ENCODE measurements at regions of chr9 and their contacts with region 1.

Region 1: DNA sequence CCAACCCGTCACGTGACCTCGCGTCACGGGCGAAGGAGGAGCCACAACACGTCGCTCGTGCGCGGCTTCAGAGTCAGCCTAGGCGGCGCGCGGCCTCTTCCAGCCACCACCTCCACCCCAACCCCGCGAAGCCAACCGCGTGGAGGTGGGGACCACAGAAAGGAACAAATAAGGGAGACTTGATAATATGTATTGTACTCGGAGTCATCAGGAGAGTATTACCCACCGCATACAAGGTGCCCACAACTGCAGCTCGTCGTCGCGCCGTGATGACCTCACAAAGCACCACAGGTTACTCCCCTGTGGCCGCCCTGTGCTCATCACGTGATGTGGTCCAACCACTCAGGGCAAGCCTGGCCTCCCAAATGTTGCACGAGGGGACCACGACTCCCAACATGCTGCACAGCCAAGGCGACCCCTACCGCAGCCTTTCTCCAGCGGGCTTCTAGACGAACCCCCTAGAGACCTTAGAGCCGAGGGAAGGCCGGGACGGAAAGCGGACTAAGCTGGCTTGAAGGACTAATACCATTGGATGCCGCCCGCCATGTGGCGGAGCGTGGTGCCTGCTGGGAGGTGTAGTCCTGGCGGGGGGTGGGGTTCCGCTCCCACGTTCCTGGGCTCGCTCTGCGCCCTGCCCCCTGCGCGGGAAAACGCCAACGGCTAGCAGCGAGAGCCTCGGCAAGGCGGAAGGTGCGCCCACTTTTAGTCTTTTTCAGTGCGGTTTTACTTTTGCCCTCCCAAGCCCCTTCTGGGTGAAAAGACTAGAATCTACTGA is 423 bp upstream of the UBAP2 start:
- DNase-seq: peak; percentile 98 to 100 (median 99)

Region 2: GRCh38 chr9:33466565-33467495 is 582.3 kb before region 1 on chr9:
- intact Hi-C with region 1: no loop called
- DNase-seq: peak in 41 of 42 donors; percentile 30 to 86 (median 64)

Region 3: GRCh38 chr9:33816327-33817252 is 232.5 kb before region 1 on chr9 and contains the start of gene UBE2R2:
- intact Hi-C with region 1: loop called (anchors 10 kb)
- DNase-seq: peak; percentile 83 to 97 (median 94)

Region 4: DNA sequence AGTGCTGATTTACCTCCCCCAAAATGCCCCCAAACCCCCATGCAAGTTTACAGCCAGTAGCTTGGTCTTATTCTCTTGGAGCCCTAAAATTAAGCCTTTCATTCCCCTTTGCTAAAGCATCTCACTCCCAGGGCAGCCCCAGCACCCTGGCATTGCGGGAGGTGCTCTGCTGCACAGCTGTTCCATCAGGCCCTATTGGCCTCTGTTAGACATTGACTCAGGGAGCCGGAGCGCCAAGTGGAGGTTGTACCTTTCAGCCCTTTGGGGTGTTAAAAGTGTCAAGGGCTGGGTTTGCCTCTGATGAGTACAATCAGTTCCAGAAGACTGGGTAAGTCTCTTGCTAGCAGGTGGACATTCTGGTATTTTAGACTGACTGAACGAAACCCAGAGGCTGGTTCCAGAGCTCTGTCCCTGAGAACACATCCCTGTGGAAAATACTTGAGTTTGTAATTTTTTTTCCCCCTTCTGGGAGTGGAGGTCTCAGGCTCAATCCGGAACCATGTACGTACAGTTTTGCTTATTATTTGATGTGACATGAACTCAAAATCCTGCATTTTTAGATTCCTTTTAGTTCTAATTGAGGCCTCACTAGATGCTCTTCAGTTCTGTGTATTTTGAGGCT is 129.7 kb before region 1 on chr9:
- intact Hi-C with region 1: no loop called
- DNase-seq: peak in 1 of 42 donors; percentile 11

Region 5: GRCh38 chr9:34106110-34106509 is 57.0 kb after region 1 on chr9:
- intact Hi-C with region 1: no loop called
- DNase-seq: peak in 7 of 42 donors; percentile 20 to 43 (median 26)

Region 6: GRCh38 chr9:34126207-34127034 is 77.3 kb after region 1 on chr9 and contains the start of gene DCAF12:
- intact Hi-C with region 1: loop called (anchors 5 kb)
- DNase-seq: peak; percentile 72 to 96 (median 90)

Region 7: GRCh38 chr9:34178520-34179212 is 129.6 kb after region 1 on chr9 and contains the start of gene UBAP1:
- intact Hi-C with region 1: loop called (anchors 10 kb)
- DNase-seq: peak; percentile 94 to 99 (median 97)

Measured in head of caudate nucleus (tissue), 42 donors.